RWPE1 (cell line): ENCODE measurements at regions of chr17 and their contacts with region 1.

Region 1: GRCh38 chr17:68004201-68004600 is 7.9 kb upstream of the C17orf58 start:
- DNase-seq: no peak
- H3K27ac ChIP-seq: no peak overlapping the region
- CTCF ChIP-seq: no peak

Region 2: DNA sequence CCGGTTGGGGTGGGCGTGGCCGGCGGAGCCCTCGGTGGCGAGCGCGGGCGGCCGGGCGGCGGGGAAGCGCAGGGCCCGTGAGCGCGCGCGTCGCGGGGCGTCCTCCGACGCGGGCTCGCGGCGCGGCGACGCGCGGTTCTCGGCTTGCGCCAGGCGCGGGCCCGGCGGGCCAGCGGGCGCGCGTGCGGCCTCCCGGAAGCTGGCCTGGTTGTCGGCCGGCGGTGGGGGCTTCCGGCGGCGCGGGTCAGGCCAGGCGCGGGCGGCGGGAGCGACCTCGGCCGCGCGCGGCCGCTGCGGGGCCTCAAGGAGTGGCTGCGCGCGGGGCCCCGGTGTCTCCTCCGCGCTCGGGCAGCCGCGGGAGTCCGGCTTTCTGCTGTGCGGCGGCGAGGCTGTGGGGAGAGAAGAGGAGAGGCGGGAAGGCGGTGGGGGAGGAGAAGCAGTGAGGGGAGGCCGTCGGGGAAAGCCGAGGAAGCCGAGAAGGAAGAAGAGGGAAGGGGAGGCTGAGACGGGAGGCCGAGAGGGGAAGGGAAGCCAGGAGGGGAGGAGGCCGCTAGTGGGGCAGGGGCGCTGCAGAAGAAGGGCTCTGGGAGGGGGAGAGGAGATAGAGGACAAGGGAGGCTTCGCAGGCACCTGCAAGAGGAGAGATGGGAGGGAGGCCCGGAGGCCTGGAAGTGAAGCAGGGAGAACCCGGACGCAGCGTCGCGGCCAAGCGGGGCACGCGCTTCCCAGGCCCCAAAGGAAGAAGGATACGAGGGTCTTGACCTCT is 10.4 kb before region 1 on chr17:
- CTCF ChIA-PET with region 1: no interaction called
- POLR2A ChIA-PET with region 1: interaction called, 10 read pairs
- DNase-seq: peak; percentile 68
- H3K27ac ChIP-seq: peak overlapping the region; percentile 99
- CTCF ChIP-seq: no peak